ENCODE measurements at regions of chr19 and their contacts with region 1.

Region 1: DNA sequence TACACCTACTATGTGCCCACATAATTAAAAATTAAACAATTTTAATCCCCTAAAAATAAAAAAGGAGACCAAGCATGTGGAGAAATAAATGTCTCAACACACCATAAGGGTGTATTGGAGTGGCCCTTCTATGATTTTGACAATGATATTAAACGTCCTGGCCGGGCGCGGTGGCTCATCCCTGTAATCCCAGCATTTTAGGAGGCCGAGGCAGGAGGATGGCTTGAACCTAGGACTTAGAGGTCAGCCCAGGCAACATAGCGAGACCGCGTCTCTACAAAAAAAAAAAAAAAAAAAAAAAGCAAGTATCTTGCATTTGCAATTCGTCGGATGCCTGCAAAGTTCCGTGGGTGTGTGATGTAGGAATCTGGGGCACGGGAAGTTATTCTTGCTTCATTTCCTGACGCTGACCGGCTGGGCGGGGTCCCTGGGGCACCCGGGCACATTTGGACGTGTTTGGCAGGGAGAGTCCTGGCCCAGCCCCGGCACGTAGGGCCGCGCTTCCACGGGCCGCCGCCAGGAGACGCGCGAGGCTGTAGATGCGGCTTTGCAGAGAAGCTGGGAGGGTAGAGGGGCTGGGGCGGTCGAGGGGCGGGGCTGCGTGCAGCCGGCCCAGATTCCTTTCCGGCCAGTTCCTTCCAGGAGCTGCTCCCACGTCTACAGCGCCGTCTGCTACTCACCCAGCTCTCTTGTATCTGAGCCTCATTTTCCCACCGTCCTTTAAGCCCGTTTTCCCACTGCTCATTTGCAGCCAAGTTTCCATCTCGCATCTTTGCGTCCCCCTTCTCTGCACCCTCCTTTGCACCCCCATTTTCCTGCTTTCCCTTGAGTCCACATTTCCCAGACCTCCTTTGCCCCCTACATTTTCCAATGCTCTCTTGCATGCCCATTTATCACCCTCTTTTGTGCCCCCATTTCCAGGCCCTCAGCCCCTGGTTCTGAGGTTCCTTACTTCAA is 2.2 kb upstream of the TSPAN16 start:
- DNase-seq: peak; percentile 72
- H3K4me3 ChIP-seq: peak overlapping the region; percentile 45
- H3K27ac ChIP-seq: peak overlapping the region; percentile 21
- H3K27me3 ChIP-seq: no peaks in the 10 kb centered on the region
- CTCF ChIP-seq: peak; percentile 97

Region 2: DNA sequence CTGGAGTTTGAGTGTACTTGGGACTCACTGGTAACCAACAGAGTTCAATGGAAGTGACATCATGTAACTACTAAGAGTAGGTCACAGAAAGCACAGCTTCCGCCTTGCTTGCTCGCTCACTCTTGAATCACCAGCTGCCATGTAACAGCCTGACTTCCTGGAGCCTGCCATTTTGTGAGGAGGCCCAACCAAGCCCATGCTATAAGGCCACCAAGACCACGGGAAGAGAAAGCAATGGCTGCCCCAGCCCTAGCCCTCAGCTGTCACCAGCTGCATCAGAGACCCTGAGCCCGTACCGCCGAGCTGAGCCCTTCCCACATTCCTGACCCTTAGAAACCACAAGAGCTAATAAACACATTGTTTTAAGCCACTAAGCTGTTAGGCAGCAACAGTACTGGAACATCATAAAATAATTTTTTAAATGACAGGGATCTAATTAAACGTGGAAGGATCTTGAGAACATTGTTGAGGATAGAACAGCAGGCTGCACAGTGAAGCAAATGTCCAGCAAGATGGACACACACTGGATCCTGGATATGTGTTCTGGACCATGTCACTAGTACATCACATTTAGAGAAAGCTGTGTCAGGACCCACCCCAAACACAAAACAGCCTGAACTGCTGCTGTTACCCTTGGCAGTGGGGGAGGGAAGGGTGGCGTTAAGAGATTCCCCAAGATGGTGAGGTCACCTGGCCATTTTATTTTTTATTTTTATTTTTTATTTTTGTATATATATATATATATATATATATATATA is 226.2 kb before region 1 on chr19:
- CTCF ChIA-PET with region 1: no interaction called
- POLR2A ChIA-PET with region 1: no interaction called
- DNase-seq: no peak
- H3K4me3 ChIP-seq: no peak overlapping the region
- H3K27ac ChIP-seq: no peak overlapping the region
- H3K27me3 ChIP-seq: no peaks in the 10 kb centered on the region
- CTCF ChIP-seq: no peak

Region 3: GRCh38 chr19:11208561-11209471 is 84.9 kb before region 1 on chr19:
- CTCF ChIA-PET with region 1: interaction called, 10 read pairs
- POLR2A ChIA-PET with region 1: no interaction called
- DNase-seq: no peak
- H3K4me3 ChIP-seq: no peak overlapping the region
- H3K27ac ChIP-seq: no peak overlapping the region
- H3K27me3 ChIP-seq: no peaks in the 10 kb centered on the region
- CTCF ChIP-seq: no peak

Region 4: DNA sequence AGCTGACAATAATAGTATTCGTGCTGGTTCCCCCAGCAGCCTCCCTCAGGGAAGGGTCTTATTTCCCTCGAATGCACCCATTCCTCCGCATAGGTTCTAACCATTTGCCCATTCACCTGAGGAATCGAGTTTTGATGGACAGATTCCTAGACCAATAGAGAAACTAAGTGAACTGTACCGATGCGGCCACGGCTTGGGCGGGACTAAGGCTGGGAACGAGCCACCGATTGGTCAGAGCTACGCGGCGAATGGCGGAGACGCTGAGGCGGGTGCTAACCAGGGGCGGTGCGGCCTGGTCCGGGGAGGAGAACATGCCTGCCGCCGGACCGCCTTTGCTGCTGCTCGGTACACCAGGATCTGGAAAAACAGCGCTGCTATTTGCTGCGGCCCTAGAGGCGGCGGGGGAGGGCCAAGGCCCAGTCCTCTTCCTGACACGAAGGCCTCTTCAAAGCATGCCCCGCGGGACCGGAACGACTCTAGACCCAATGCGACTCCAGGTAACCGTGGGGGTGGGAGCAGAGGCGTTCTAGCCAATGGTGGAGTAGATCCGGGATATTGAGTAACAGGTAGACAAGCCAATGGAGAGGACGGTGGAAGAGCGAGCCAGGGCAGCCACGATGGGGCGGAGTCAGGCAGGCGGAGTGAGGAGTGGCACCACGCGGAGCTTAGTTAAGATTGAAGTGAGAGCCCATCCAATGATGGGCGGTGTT is 80.9 kb after region 1 on chr19 and contains the start of gene SWSAP1:
- CTCF ChIA-PET with region 1: interaction called, 13 read pairs
- POLR2A ChIA-PET with region 1: interaction called, 13 read pairs
- DNase-seq: peak; percentile 99
- H3K4me3 ChIP-seq: peak within 1 kb of the TSS; percentile 84
- H3K27ac ChIP-seq: peak within 1 kb of the TSS; percentile 91
- H3K27me3 ChIP-seq: no peaks in the 10 kb centered on the region
- CTCF ChIP-seq: no peak
- polyA plus RNA-seq, gene SWSAP1: 0.88 and 0.89 TPM in 2 replicates

Region 5: GRCh38 chr19:11405846-11406643 is 112.3 kb after region 1 on chr19:
- CTCF ChIA-PET with region 1: interaction called, 11 read pairs
- POLR2A ChIA-PET with region 1: no interaction called
- DNase-seq: no peak
- H3K4me3 ChIP-seq: no peak overlapping the region
- H3K27ac ChIP-seq: no peak overlapping the region
- H3K27me3 ChIP-seq: no peaks in the 10 kb centered on the region
- CTCF ChIP-seq: peak; percentile 46

Region 6: DNA sequence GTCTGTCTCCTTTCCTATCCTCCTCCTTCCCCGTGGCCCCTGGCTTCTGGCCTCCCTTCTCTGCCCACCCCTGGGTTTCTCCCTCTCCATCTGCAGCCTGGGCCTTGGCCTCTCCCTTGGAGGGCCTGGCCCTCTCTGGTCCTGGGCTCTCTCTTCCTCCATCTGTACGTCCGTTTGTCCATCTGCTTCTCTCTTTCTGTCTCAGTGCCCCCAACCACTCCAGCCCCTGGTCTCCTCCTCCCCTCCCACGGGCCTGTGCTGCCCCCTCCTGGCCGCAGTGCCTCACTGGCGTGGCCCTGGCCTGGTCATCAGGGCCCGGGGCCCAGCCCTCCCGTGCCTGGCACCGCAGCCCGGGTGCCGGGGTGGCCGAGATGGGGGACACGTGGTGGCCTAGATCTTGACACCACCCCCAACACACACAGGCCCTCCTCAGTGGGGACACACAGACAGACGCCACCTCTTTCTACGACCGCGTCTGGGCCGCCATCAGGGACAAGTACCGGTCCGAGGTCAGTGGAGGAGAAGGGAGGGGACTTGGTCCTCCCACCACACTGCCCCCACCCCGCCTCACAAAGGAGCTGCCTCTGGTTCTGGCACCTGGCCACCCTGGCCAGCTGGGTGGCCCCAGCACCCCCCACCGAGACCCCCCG is 153.1 kb after region 1 on chr19:
- CTCF ChIA-PET with region 1: interaction called, 16 read pairs
- POLR2A ChIA-PET with region 1: no interaction called
- DNase-seq: no peak
- H3K4me3 ChIP-seq: no peak overlapping the region
- H3K27ac ChIP-seq: no peak overlapping the region
- H3K27me3 ChIP-seq: no peaks in the 10 kb centered on the region
- CTCF ChIP-seq: peak; percentile 74